ENCODE measurements at regions of chr15 and their contacts with region 1.

Region 1: DNA sequence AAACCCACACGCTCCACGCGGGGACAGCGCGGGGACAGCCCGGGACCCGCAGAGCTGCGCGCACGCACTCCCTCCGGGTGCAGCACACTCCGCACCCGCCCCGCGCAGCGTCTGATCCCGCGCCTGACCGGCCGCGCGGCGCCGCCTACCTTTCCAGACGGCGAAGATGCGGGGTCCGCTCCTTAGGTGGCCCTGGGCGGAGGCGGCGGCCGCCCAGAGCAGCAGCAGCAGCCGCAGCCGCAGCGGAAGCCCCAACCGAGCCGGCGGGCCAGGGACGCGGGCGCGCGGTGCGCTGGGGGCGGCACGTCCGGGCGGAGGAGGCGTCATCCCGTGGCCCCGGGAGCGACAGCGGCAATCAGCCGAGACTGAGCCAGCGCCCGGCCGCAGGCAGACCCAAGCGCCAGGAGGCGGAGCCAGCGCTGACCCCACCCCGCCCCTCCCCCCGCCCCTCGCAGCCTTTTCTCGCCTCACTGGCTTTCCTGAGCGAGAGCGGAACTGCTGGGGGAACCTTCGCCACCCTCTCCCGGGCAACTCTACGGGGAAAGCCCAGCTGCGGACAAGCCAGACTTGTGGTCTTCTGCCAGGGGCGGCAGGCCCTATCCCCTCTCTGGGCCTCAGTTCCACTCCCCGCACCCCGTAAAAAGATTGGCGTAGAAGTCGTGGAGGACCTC is at the start of gene SEMA7A:
- DNase-seq: peak; percentile 90
- ATAC-seq: peak; percentile 89
- H3K4me3 Mint-ChIP-seq: peak within 1 kb of the TSS; percentile 83
- H3K27ac Mint-ChIP-seq: peak within 1 kb of the TSS; percentile 56
- H3K4me1 Mint-ChIP-seq: peaks cover 59% of the 10 kb centered on the region
- H3K27me3 Mint-ChIP-seq: no peaks in the 10 kb centered on the region
- total RNA-seq, gene SEMA7A: 57.3 to 57.7 TPM

Region 2: DNA sequence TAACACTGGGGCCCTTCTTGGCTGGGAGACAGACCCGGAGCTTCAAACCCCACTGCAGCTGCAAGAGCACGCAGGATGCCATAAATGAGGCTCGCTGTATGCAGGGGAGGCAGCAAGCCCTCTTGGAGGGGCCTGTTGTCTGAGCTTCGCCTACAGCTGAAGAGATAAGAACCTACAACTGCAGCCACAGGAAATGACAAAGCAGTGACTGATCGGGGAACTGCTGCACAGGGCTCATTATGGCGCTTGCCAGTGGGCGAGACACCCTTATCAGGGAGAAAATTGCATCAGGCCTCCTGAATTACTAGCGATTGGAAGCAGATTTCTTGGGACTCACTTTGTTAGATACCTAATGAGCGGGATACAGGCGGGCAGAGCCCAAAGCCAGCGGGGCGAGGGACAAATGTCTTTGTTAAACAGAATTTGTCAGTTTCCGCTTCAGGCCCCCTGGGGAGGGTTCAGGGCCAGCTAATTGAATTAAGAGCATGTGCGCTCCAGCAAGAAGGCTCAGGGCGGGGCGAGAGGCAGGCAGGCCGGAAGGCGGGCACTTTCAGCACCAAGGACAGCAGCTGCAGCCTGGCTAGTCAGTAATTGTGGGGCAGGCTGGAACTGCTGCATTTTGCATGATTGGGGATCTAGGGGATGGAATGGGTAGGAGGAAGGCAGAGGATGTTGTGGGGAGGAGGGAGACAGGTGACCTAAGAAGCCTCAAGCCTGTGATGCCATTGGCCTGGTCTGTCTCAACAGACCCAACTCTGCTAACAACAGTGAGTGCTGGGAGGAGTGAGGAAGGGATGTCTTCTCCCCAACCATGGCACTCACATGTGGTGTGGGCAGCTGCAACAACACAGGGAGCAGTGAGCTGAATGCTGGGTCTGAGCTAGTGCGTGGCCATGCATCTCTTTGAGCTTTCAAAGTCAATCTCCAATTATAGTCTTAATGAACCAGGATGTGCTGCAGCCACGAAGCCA is 142.3 kb before region 1 on chr15:
- CTCF ChIA-PET with region 1: no interaction called
- POLR2A ChIA-PET with region 1: no interaction called
- intact Hi-C with region 1: no loop called
- DNase-seq: peak; percentile 91
- ATAC-seq: peak; percentile 92
- H3K4me3 Mint-ChIP-seq: peak overlapping the region; percentile 26
- H3K27ac Mint-ChIP-seq: peak overlapping the region; percentile 69
- H3K4me1 Mint-ChIP-seq: peaks cover 13% of the 10 kb centered on the region
- H3K27me3 Mint-ChIP-seq: peaks cover 24% of the 10 kb centered on the region

Region 3: DNA sequence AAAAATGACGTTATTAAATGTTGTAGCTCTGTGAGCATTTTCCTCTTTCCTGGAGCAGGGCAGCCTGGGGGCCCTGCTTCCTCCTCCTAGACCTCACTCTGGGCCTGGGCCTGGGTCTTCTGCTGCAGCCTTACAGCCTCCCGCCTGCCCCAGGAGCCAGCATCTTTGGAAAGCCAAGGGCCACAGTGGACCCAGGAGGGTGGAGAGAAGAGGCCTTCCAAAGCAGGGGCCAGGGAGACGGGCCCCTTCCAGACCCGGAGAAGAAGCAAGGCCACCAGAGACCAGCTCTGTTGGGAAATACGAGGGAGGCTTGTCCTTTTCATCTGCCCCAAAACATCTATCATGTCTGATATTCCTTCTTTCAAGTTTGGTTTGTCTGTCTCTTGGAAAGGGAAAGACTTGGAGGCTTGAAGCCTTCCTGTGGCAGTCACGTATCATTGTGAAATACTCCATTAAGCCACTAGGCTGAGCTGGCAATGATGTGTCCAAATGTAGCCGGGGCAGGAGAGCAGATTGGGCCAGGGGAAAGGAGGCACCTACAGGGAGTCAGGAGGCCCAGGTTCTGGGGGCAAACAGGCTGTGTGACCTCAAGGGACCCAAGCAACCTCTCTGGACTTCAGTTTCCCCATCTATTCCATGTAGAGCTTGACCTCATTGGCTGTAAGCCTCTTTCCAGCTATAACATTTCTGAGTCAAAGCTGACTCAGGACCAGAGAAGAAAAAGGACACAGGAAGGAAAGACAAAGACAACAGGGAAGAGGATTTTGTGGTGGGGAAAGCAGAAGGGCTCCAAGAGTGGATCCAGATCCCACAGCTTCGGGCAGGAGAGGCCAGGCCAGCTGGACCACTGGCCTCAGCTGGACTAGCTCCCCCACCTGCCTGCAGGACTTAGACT is 97.4 kb before region 1 on chr15:
- CTCF ChIA-PET with region 1: no interaction called
- POLR2A ChIA-PET with region 1: no interaction called
- intact Hi-C with region 1: no loop called
- DNase-seq: no peak
- ATAC-seq: no peak
- H3K4me3 Mint-ChIP-seq: no peak overlapping the region
- H3K27ac Mint-ChIP-seq: no peak overlapping the region
- H3K4me1 Mint-ChIP-seq: no peaks in the 10 kb centered on the region
- H3K27me3 Mint-ChIP-seq: no peaks in the 10 kb centered on the region

Region 4: GRCh38 chr15:74396445-74397238 is 37.1 kb before region 1 on chr15:
- CTCF ChIA-PET with region 1: interaction called, 4 read pairs
- POLR2A ChIA-PET with region 1: no interaction called
- intact Hi-C with region 1: loop called in 1 of 2 experiments (anchors 2 kb)
- DNase-seq: peak; percentile 83
- ATAC-seq: peak; percentile 57
- H3K4me3 Mint-ChIP-seq: peak overlapping the region; percentile 18
- H3K27ac Mint-ChIP-seq: peak overlapping the region; percentile 98
- H3K4me1 Mint-ChIP-seq: peaks cover 92% of the 10 kb centered on the region
- H3K27me3 Mint-ChIP-seq: no peaks in the 10 kb centered on the region

Region 5: GRCh38 chr15:74407055-74407691 is 26.6 kb before region 1 on chr15:
- CTCF ChIA-PET with region 1: interaction called, 15 read pairs
- POLR2A ChIA-PET with region 1: no interaction called
- intact Hi-C with region 1: loop called in 1 of 2 experiments (anchors 1 kb)
- DNase-seq: no peak
- ATAC-seq: no peak
- H3K4me3 Mint-ChIP-seq: no peak overlapping the region
- H3K27ac Mint-ChIP-seq: no peak overlapping the region
- H3K4me1 Mint-ChIP-seq: peaks cover 29% of the 10 kb centered on the region
- H3K27me3 Mint-ChIP-seq: no peaks in the 10 kb centered on the region

Region 6: DNA sequence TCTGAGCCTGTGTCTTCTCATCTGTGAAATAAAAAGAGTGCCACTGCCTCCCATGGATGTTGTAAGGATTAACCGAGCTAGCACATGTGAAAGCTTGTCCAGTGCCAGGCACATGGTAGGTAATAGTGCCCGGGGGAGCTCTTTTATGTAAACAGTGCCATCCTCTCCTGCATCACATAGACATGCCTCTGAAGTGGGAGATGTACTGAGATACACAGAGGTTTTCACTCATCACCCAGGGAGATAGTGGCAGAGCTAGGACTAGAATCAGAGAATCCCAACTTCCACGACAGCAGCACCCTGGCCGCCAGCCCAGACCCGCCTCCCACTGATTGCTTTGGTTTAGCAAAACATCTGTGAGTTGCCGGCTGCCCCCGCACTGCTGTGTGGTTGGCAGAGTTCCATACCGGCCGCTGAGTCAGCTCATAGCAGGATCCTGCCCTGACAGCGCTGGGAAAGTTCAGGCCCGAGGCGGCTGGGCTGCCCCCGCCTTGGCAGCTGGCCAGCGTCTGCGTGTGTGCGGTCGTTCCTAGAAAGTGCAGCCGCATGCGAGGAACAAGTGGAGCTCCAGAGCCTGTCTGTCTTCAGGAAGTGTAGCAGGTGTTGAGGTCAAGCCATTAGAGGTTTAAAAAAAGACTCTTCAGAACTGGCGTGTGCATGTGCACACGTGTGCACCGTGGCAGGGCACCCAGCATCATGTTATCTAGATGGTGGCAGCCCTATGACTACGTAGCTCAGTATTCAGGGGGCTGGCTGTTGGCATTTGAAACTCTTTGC is 112.3 kb after region 1 on chr15:
- CTCF ChIA-PET with region 1: interaction called, 4 read pairs
- POLR2A ChIA-PET with region 1: no interaction called
- intact Hi-C with region 1: loop called (anchors 1 to 10 kb)
- DNase-seq: peak; percentile 98
- ATAC-seq: peak; percentile 72
- H3K4me3 Mint-ChIP-seq: peak overlapping the region; percentile 29
- H3K27ac Mint-ChIP-seq: peak overlapping the region; percentile 44
- H3K4me1 Mint-ChIP-seq: peaks cover 62% of the 10 kb centered on the region
- H3K27me3 Mint-ChIP-seq: peaks cover 2% of the 10 kb centered on the region